ENCODE measurements at regions of chr19 and their contacts with region 1.

Region 1: DNA sequence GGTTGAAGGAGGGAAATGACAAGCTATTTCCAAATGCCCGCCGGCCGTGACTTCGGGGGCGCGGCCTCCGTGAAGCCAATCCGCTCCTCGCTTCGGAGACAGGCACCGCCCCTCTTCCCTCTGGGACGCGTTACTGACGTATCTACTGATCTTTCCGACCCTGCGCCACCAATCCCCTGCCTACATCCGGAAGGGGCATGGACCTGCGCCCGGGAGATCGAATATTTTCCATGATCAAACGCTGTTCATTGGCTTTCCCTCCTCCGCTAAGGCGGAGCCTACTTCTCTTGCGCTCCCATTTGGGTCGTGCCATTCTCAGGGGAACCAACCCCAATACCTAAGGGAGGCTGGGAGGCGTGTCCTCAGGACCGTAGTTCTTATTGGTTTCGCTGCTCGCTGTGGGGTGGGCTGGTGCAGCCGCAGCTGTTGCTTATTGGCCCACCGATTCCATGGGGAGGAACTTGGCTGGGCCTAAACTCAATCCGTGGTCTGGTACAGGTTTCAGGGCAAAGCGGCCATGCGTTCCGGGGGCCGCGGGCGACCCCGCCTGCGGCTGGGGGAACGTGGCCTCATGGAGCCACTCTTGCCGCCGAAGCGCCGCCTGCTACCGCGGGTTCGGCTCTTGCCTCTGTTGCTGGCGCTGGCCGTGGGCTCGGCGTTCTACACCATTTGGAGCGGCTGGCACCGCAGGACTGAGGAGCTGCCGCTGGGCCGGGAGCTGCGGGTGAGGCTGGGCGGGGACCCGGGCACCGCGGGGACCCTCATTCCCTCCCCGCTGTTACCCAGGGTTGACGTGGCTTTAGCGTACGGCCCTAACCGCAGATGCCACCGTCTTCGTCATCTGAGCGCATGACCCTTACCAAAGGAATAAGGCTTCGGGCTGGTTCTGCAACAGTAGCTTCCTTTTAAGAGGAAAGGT is at the start of gene QPCTL:
- DNase-seq: peak; percentile 100
- H3K4me3 ChIP-seq: peak within 1 kb of the TSS; percentile 72 to 91 (median 83)
- H3K27ac ChIP-seq: peak within 1 kb of the TSS; percentile 93
- H3K4me1 ChIP-seq: peaks cover 8% of the 10 kb centered on the region
- H3K27me3 ChIP-seq: no peaks in the 10 kb centered on the region
- CTCF ChIP-seq: no peak
- total RNA-seq, gene QPCTL: 22.5 to 22.6 TPM

Region 2: GRCh38 chr19:45423589-45424190 is 268.8 kb before region 1 on chr19 and contains the start of gene ERCC1:
- CTCF ChIA-PET with region 1: interaction called, 4 read pairs
- dilution Hi-C with region 1: no loop called
- in situ Hi-C with region 1: no loop called
- intact Hi-C with region 1: loop called (anchors 5 kb)
- DNase-seq: peak; percentile 99
- H3K4me3 ChIP-seq: peak within 1 kb of the TSS; percentile 50 to 95 (median 66)
- H3K27ac ChIP-seq: peak within 1 kb of the TSS; percentile 100
- H3K4me1 ChIP-seq: peaks cover 45% of the 10 kb centered on the region
- H3K27me3 ChIP-seq: no peaks in the 10 kb centered on the region
- CTCF ChIP-seq: no peak
- total RNA-seq, gene ERCC1: 81.9 to 316 TPM

Region 3: GRCh38 chr19:45506246-45506990 is 186.0 kb before region 1 on chr19:
- CTCF ChIA-PET with region 1: no interaction called
- dilution Hi-C with region 1: loop called (anchors 5 kb)
- in situ Hi-C with region 1: no loop called
- intact Hi-C with region 1: no loop called
- DNase-seq: peak; percentile 94
- H3K4me3 ChIP-seq: peak overlapping the region; percentile 78 to 95 (median 90)
- H3K27ac ChIP-seq: peak overlapping the region; percentile 90
- H3K4me1 ChIP-seq: peaks cover 17% of the 10 kb centered on the region
- H3K27me3 ChIP-seq: no peaks in the 10 kb centered on the region
- CTCF ChIP-seq: peak; percentile 17 to 69

Region 4: GRCh38 chr19:45584332-45585157 is 107.9 kb before region 1 on chr19 and contains the start of gene OPA3:
- CTCF ChIA-PET with region 1: no interaction called
- dilution Hi-C with region 1: no loop called
- in situ Hi-C with region 1: no loop called
- intact Hi-C with region 1: loop called (anchors 2 kb)
- DNase-seq: peak; percentile 100
- H3K4me3 ChIP-seq: peak within 1 kb of the TSS; percentile 68 to 91 (median 71)
- H3K27ac ChIP-seq: peak within 1 kb of the TSS; percentile 98
- H3K4me1 ChIP-seq: peaks cover 22% of the 10 kb centered on the region
- H3K27me3 ChIP-seq: no peaks in the 10 kb centered on the region
- CTCF ChIP-seq: no peak
- total RNA-seq, gene OPA3: 13.7 to 17.4 TPM

Region 5: DNA sequence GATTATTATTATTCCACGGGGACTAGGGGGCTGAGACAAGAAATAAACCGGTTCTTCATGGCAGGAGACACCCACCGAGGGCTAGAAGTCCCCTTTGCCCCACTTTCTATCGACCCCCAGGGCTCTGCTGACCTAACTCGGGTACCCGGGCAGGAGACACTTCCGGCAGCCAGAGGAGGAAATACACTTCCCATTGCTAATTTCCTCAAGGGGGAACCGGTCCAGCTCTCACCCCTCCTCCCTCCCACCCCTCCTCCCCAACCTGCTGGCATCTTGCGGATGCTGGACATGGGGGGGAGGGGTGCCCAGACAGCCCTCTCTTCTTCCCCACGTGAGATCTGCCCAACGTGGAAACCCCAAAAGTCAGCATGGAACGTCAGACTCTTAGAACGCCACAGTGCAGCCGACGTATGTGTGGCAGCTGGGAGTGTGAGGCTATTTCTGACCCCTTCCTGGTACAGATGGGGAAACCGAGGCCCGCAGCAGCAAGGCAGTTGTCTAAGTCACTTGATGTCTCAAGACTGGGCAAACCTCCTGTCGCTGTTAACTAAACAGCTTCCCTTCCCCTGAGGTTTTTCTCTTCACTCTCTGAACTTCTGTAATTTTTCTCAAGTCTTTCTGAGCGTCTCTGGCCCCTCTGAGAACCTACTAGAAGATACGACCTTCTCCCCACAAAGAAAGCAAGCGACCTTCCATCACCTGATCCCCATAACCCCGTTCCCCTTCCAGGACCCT is 94.0 kb before region 1 on chr19:
- CTCF ChIA-PET with region 1: no interaction called
- dilution Hi-C with region 1: loop called (anchors 5 kb)
- in situ Hi-C with region 1: no loop called
- intact Hi-C with region 1: no loop called
- DNase-seq: no peak
- H3K4me3 ChIP-seq: no peak overlapping the region
- H3K27ac ChIP-seq: no peak overlapping the region
- H3K4me1 ChIP-seq: no peaks in the 10 kb centered on the region
- H3K27me3 ChIP-seq: peaks cover 18% of the 10 kb centered on the region
- CTCF ChIP-seq: no peak

Region 6: DNA sequence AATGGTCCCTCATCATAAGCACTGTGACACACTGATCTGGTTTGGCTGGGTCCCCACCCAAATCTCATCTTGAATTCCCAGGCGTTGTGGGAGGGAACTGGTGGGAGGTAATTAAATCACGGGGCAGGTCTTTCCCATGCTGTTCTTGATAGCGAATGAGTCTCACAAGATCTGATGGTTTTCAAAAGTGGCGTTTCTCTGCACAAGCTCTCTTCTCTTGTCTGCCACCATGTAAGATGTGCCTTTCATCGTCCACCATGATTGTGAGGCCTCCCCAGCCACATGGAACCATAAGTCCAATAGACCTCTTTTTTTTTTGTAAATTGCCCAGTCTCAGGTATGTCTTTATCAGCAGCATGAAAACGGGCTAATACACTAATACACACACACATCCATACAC is 83.5 kb before region 1 on chr19:
- CTCF ChIA-PET with region 1: no interaction called
- dilution Hi-C with region 1: no loop called
- in situ Hi-C with region 1: no loop called
- intact Hi-C with region 1: no loop called
- DNase-seq: no peak
- H3K4me3 ChIP-seq: no peak overlapping the region
- H3K27ac ChIP-seq: no peak overlapping the region
- H3K4me1 ChIP-seq: peaks cover 11% of the 10 kb centered on the region
- H3K27me3 ChIP-seq: no peaks in the 10 kb centered on the region
- CTCF ChIP-seq: no peak

Region 7: DNA sequence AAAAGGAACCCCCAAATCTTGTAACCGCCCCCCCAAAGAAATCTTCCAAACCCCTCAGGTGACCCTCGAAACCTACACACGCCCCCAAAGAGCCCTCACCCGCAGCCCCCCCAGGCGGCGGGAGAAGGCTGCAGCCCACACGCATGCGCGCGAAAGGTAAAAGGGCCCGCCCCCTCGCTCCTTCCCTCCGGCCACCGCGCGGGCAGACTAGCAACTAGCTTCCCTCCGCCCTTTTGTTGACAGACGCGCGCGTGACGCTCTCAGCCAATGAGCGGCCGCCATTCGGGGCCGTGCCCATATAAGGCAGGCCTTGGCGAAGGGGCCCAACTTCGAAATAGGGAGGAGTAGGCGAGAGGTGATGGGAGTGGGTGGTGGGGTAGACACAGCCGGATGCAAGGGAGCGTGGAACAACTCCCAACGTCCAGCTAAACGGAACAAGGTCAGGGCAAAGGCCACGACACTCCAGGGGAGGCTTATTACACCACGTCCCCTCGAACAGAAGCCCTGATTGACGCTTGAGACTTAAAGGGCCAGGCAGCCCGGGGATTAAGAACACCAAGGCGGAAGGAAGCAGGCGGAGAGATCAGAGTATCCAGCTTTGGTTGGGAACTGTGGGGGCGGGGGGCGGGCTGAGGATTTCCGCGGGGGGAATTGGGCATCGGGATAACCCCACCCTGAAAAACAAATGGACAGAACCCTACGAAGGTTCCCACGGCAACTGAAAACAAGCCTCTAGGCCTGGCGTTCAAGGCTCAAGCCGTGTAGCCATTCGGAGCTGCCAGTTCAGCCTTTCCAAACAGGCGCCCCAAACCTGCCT is 24.9 kb after region 1 on chr19:
- CTCF ChIA-PET with region 1: interaction called, 3 read pairs
- dilution Hi-C with region 1: no loop called
- in situ Hi-C with region 1: no loop called
- intact Hi-C with region 1: loop called (anchors 2 kb)
- DNase-seq: peak; percentile 97
- H3K4me3 ChIP-seq: peak overlapping the region; percentile 64 to 91 (median 65)
- H3K27ac ChIP-seq: peak overlapping the region; percentile 87
- H3K4me1 ChIP-seq: peaks cover 23% of the 10 kb centered on the region
- H3K27me3 ChIP-seq: no peaks in the 10 kb centered on the region
- CTCF ChIP-seq: peak; percentile 5 to 29

Region 8: GRCh38 chr19:45770192-45771101 is 78.0 kb after region 1 on chr19:
- CTCF ChIA-PET with region 1: interaction called, 9 read pairs
- dilution Hi-C with region 1: no loop called
- in situ Hi-C with region 1: loop called in 1 of 2 experiments (anchors 10 kb)
- intact Hi-C with region 1: loop called (anchors 1 kb)
- DNase-seq: peak; percentile 98
- H3K4me3 ChIP-seq: peak overlapping the region; percentile 50 to 83 (median 75)
- H3K27ac ChIP-seq: no peak overlapping the region
- H3K4me1 ChIP-seq: peaks cover 33% of the 10 kb centered on the region
- H3K27me3 ChIP-seq: no peaks in the 10 kb centered on the region
- CTCF ChIP-seq: peak; percentile 44 to 93

Measured in mammary epithelial cell (primary cell).